PC-3 (cell line): ENCODE measurements at regions of chr11 and their contacts with region 1.

Region 1: GRCh38 chr11:57324886-57325734 is at the start of gene TNKS1BP1:
- DNase-seq: peak; percentile 98
- ATAC-seq: peak; percentile 64
- H3K4me3 ChIP-seq: peak within 1 kb of the TSS; percentile 85
- H3K27ac ChIP-seq: peak within 1 kb of the TSS; percentile 85
- H3K4me1 ChIP-seq: peaks cover 53% of the 10 kb centered on the region
- H3K27me3 ChIP-seq: no peaks in the 10 kb centered on the region
- CTCF ChIP-seq: no peak
- total RNA-seq, gene TNKS1BP1: 89.6 and 143 TPM in 2 replicates

Region 2: GRCh38 chr11:57277845-57278709 is 47.0 kb before region 1 on chr11:
- CTCF ChIA-PET with region 1: no interaction called
- POLR2A ChIA-PET with region 1: no interaction called
- intact Hi-C with region 1: loop called (anchors 1 kb)
- DNase-seq: peak; percentile 89
- ATAC-seq: peak; percentile 96
- H3K4me3 ChIP-seq: peak overlapping the region; percentile 51
- H3K27ac ChIP-seq: no peak overlapping the region
- H3K4me1 ChIP-seq: peaks cover 20% of the 10 kb centered on the region
- H3K27me3 ChIP-seq: no peaks in the 10 kb centered on the region
- CTCF ChIP-seq: peak; percentile 96

Region 3: GRCh38 chr11:57311109-57311936 is 13.8 kb before region 1 on chr11:
- CTCF ChIA-PET with region 1: interaction called, 8 read pairs
- POLR2A ChIA-PET with region 1: interaction called, 12 read pairs
- intact Hi-C with region 1: loop called (anchors 1 kb)
- DNase-seq: peak; percentile 96
- ATAC-seq: peak; percentile 94
- H3K4me3 ChIP-seq: peak overlapping the region; percentile 67
- H3K27ac ChIP-seq: peak overlapping the region; percentile 86
- H3K4me1 ChIP-seq: peaks cover 53% of the 10 kb centered on the region
- H3K27me3 ChIP-seq: no peaks in the 10 kb centered on the region
- CTCF ChIP-seq: no peak

Region 4: DNA sequence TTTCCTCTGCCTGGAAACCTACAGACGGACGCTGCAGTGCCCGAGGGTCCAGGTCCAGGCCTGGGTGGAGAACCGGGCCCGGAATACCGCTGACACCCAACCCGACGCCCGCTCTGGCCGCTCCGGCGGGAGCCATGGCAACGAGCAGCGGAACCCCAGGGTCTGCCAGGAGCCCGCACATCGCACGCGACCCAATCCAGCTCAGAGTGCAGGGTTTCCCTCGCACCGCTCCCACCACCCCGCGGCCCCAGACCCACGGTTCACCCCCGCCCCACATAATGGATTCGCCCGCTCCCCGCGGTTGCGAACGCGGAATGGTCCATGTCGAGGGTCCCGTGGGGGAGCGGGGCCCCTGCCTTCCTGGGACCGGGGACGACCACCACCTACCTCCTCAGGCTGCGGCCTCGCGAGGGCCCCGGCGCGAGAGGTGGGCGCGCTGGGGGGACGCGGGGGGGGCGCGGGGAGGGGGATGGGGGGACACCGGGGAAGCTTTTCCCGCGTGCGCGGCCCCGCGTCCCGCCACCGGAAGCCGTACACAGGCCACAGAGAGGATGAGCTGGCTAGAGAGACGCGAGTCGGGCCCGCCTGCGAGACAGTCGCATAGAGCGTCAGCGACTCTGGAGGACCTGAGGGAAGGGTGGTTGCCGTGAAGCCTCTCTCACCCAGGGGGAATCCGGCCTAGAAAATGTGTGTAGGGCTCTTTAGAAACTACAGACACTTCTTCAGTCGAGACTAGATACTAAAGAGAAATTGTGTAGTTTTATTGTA is 10.4 kb after region 1 on chr11 and contains the start of gene SSRP1:
- CTCF ChIA-PET with region 1: interaction called, 4 read pairs
- POLR2A ChIA-PET with region 1: interaction called, 7 read pairs
- intact Hi-C with region 1: loop called (anchors 1 kb)
- DNase-seq: peak; percentile 92
- ATAC-seq: peak; percentile 99
- H3K4me3 ChIP-seq: peak within 1 kb of the TSS; percentile 87
- H3K27ac ChIP-seq: peak within 1 kb of the TSS; percentile 51
- H3K4me1 ChIP-seq: peaks cover 23% of the 10 kb centered on the region
- H3K27me3 ChIP-seq: no peaks in the 10 kb centered on the region
- CTCF ChIP-seq: 0 out of 2 replicates have a peak, but pooled peaks have one; percentile 9
- total RNA-seq, gene SSRP1: 228 and 341 TPM in 2 replicates